ENCODE measurements at regions of chr19 and their contacts with region 1.

Region 1: DNA sequence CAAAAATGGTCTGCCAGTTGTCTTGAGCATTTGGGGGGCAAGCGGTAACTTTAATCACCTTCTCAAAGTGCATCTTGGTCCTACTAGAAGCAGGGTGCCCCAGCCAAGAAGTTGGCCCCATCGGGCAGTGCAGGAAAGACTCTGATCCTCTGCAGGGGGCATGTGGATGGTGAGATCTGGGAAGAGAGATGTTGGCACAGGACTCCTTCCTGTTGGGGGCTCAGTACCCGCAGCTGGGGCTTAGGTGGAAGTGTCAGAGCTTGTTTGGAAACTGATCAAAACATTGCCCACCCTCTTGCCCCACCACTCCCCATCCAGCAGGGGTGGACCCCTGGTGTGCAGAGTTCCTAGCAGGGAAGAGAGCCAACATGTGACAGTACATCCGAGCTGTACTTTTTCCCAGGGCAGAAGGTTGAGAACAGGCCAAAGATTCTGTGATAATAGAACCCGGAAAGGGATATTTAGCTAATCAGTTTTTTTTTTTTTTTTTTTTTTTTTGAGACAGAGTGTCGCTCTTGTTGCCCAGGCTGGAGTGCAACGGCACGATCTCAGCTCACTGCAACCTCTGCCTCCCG is 8.8 kb downstream of the RRAS start:
- DNase-seq: no peak
- H3K4me3 ChIP-seq: no peak overlapping the region
- H3K27ac ChIP-seq: no peak overlapping the region
- H3K4me1 ChIP-seq: no peaks in the 10 kb centered on the region
- H3K27me3 ChIP-seq: no peaks in the 10 kb centered on the region
- CTCF ChIP-seq: no peak

Region 2: GRCh38 chr19:49009828-49010227 is 621.3 kb before region 1 on chr19:
- CTCF ChIA-PET with region 1: no interaction called
- POLR2A ChIA-PET with region 1: interaction called, 18 read pairs
- intact Hi-C with region 1: no loop called
- DNase-seq: no peak
- H3K4me3 ChIP-seq: no peak overlapping the region
- H3K27ac ChIP-seq: no peak overlapping the region
- H3K4me1 ChIP-seq: no peaks in the 10 kb centered on the region
- H3K27me3 ChIP-seq: no peaks in the 10 kb centered on the region
- CTCF ChIP-seq: no peak

Region 3: DNA sequence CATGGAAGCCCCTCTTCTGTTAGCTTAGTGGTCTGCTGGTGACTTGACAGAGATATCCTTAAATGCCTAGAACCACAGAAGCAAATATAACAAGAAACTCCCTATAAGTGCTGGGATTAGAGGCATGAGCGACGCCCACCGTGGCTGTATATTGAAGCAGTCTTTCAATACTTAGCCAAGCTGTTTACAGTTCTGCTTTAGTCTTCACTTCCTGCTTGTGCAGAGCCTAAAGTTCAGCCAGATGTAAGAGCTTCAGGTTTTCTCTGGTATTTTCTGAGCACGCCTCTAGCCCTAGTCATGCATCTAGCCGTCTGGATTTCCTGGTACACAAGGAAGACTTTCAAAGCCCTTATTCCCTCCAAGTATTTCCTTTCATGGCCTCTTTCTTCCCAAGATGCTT is 445.0 kb before region 1 on chr19:
- CTCF ChIA-PET with region 1: no interaction called
- POLR2A ChIA-PET with region 1: no interaction called
- intact Hi-C with region 1: no loop called
- DNase-seq: peak in 1 of 2 experiments; percentile 25
- H3K4me3 ChIP-seq: no peak overlapping the region
- H3K27ac ChIP-seq: no peak overlapping the region
- H3K4me1 ChIP-seq: no peaks in the 10 kb centered on the region
- H3K27me3 ChIP-seq: no peaks in the 10 kb centered on the region
- CTCF ChIP-seq: no peak